Activated B cell treated with CpG ODN at 0.5 μM for 24 hours (primary cell): ENCODE measurements at regions of chr11 and their contacts with region 1.

Region 1: DNA sequence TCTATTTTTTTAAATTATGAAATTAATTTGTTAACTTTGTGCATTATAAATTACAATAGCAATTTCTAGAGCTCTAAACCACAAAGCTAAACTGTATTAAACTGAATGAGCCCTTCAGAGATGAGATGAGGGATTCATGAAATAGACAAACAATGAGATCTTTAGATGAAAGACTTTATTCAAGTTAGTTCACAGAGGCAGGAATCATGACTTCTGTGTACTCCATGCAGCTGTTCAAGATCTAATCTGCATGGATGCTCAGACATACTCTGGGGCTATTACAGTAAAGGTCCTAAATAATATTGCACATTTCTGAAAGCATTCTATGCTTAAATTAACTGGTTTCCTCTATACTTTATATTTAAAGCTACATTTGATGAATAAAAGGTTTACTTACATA is 122.7 kb downstream of the FCHSD2 start:
- DNase-seq: no peak
- ATAC-seq: no peak
- H3K4me3 Mint-ChIP-seq: no peak overlapping the region
- H3K27ac Mint-ChIP-seq: no peak overlapping the region
- H3K4me1 Mint-ChIP-seq: peaks cover 60% of the 10 kb centered on the region
- H3K27me3 Mint-ChIP-seq: no peaks in the 10 kb centered on the region
- CTCF ChIP-seq: no peak

Region 2: GRCh38 chr11:72935700-72936099 is 83.7 kb before region 1 on chr11:
- CTCF ChIA-PET with region 1: no interaction called
- POLR2A ChIA-PET with region 1: interaction called, 12 read pairs
- intact Hi-C with region 1: no loop called
- DNase-seq: no peak
- ATAC-seq: no peak
- H3K4me3 Mint-ChIP-seq: no peak overlapping the region
- H3K27ac Mint-ChIP-seq: peak overlapping the region; percentile 68
- H3K4me1 Mint-ChIP-seq: peaks cover 47% of the 10 kb centered on the region
- H3K27me3 Mint-ChIP-seq: no peaks in the 10 kb centered on the region
- CTCF ChIP-seq: no peak

Region 3: GRCh38 chr11:73034777-73035176 is 15.3 kb after region 1 on chr11:
- CTCF ChIA-PET with region 1: no interaction called
- POLR2A ChIA-PET with region 1: no interaction called
- intact Hi-C with region 1: loop called (anchors 2 kb)
- DNase-seq: no peak
- ATAC-seq: no peak
- H3K4me3 Mint-ChIP-seq: no peak overlapping the region
- H3K27ac Mint-ChIP-seq: peak overlapping the region; percentile 68
- H3K4me1 Mint-ChIP-seq: peaks cover 61% of the 10 kb centered on the region
- H3K27me3 Mint-ChIP-seq: no peaks in the 10 kb centered on the region
- CTCF ChIP-seq: no peak

Region 4: DNA sequence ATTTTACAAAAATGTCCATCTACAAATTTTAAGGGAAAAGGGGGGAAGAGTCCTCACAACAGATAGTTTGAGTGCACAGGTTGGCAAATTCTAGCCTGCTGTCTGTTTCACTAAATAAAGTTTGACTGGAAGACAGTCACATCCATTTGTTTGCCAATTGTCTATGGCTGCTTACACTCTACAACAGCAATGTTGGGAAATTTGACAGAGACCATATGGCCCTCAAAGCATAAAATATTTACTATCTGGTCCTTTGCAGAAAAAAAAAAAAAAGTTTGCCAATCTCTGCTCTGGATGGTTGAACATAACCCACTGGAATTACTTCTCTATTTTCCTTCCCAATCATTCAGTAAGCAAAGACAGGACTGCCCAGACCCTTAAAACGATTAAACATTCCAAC is 34.5 kb after region 1 on chr11:
- CTCF ChIA-PET with region 1: no interaction called
- POLR2A ChIA-PET with region 1: no interaction called
- intact Hi-C with region 1: loop called (anchors 5 kb)
- DNase-seq: no peak
- ATAC-seq: no peak
- H3K4me3 Mint-ChIP-seq: no peak overlapping the region
- H3K27ac Mint-ChIP-seq: peak overlapping the region; percentile 69
- H3K4me1 Mint-ChIP-seq: peaks cover 80% of the 10 kb centered on the region
- H3K27me3 Mint-ChIP-seq: no peaks in the 10 kb centered on the region
- CTCF ChIP-seq: no peak